ENCODE measurements at regions of chr7 and their contacts with region 1.

Region 1: DNA sequence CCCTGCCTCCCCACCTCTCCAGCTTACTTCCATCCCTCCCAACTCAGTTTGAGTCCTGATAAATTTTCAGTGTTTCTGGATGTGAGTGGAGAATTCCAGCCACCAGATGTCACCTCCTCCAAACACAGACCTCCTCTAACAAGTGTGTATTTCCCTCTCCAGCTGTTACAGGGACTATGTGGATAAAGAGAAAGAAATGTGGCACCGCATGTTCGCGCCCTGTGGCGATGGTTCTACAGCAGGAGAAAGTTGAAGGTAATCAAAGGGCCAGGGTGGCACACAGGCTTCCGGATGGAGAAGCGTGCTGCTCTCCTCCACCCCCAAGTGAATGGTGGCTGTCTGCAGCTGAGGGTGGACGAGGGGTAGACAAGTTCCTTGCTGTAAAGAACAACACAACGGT is 14.7 kb downstream of the FKBP6 start:
- DNase-seq: peak; percentile 33
- H3K4me3 ChIP-seq: no peak overlapping the region
- H3K27ac ChIP-seq: no peak overlapping the region
- H3K4me1 ChIP-seq: no peaks in the 10 kb centered on the region
- H3K27me3 ChIP-seq: no peaks in the 10 kb centered on the region
- CTCF ChIP-seq: peak in 2 of 3 experiments; percentile 45
- POLR2A ChIP-seq: no peak

Region 2: GRCh38 chr7:73451780-73452398 is 109.2 kb after region 1 on chr7:
- intact Hi-C with region 1: loop called (anchors 5 kb)
- DNase-seq: no peak
- H3K4me3 ChIP-seq: no peak overlapping the region
- H3K27ac ChIP-seq: no peak overlapping the region
- H3K4me1 ChIP-seq: no peaks in the 10 kb centered on the region
- H3K27me3 ChIP-seq: no peaks in the 10 kb centered on the region
- CTCF ChIP-seq: peak; percentile 96 to 98 (median 98)
- POLR2A ChIP-seq: no peak

Region 3: DNA sequence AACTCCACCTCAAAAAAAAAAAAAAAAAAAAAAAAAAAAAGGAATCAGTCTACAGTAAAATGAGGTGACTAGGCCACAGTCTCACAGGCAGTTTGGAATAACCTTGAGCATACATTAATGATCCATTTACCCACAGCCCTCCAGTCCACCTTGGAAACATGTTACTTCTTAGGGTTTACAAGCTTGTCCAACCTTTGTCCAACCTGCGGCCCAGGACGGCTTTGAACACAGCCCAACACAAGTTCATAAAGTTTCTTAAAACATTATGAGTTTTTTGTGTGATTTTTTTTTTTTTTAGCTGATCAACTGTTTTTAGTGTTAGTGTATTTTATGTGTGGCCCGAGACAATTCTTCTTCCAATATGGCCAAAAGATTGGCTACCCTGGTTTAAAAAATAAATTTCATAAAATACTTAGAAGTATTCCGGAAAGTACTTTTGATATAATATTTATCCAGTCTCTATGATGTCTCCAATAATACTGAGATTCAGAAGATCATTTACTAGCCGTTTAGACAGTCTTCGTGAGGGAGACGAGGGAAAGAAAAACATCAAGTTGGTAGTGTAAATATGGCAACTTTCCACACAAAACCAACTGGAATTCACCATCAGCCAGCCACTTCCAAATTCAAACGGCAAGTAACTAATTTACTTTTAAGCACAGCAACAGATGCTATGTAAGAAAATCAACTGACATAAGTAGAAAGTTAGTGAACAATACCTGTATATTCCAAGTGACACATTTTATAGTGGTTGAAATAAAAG is 169.6 kb after region 1 on chr7:
- intact Hi-C with region 1: no loop called
- DNase-seq: no peak
- H3K4me3 ChIP-seq: no peak overlapping the region
- H3K27ac ChIP-seq: no peak overlapping the region
- H3K4me1 ChIP-seq: no peaks in the 10 kb centered on the region
- H3K27me3 ChIP-seq: no peaks in the 10 kb centered on the region
- CTCF ChIP-seq: no peak
- POLR2A ChIP-seq: no peak